ENCODE measurements at regions of chr3 and their contacts with region 1.

Region 1: GRCh38 chr3:147640781-147641180 is 231.6 kb downstream of the ZIC1 start:
- DNase-seq: no peak
- H3K4me3 ChIP-seq: no peak overlapping the region
- H3K27ac ChIP-seq: no peak overlapping the region
- H3K4me1 ChIP-seq: no peaks in the 10 kb centered on the region
- H3K27me3 ChIP-seq: no peaks in the 10 kb centered on the region
- CTCF ChIP-seq: no peak

Region 2: DNA sequence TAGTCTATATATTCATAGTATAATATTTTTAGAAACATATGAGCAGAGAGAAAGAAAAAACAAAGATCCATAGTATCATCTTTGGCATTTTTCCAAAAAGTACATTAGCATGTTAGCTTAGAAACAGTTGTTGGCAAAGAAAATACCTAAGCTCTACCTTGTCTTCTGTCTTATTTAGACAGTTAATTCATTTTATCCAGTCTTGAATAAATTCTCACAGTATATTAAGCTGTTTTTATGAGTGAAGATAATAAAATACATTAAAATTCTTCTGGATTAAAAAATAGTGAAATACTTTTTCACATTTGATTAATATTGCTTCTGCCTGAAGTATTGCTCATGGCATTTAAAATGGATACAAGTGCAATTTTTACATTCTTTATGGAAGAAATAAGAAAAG is 86.4 kb before region 1 on chr3:
- CTCF ChIA-PET with region 1: interaction called, 14 read pairs
- POLR2A ChIA-PET with region 1: no interaction called
- intact Hi-C with region 1: no loop called
- DNase-seq: no peak
- H3K4me3 ChIP-seq: no peak overlapping the region
- H3K27ac ChIP-seq: no peak overlapping the region
- H3K4me1 ChIP-seq: no peaks in the 10 kb centered on the region
- H3K27me3 ChIP-seq: no peaks in the 10 kb centered on the region
- CTCF ChIP-seq: no peak

Region 3: DNA sequence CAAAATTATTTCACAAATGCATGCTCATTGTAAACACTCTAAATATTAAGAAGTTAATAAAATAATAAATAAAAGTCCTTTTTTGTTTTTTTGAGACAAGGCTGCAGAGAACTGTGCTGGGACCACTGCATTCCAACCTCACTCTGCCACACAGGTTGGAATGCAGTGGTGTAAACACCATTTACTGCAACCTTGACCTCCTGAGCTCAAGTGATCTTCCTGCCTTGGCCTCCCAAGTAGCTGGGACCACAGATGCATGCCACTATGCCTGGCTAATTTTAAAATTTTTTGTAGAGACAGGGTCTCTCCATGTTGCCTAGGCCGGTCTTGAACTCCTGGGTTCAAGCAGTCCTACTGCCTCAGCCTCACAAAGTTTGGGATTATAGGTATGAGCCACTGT is 346.8 kb after region 1 on chr3:
- CTCF ChIA-PET with region 1: no interaction called
- POLR2A ChIA-PET with region 1: no interaction called
- intact Hi-C with region 1: no loop called
- DNase-seq: no peak
- H3K4me3 ChIP-seq: no peak overlapping the region
- H3K27ac ChIP-seq: no peak overlapping the region
- H3K4me1 ChIP-seq: no peaks in the 10 kb centered on the region
- H3K27me3 ChIP-seq: no peaks in the 10 kb centered on the region
- CTCF ChIP-seq: no peak